Activated T-helper 2 cell treated with anti-CD3 and anti-CD28 coated beads, Interferon-gamma antibody, Interleukin-2, Interleukin-4, amounts not matched to agents 10 μg/mL and 5 μg/mL and 100 μg/mL, durations not matched to agents 14 hours and 24 hours and 36 hours (primary cell): ENCODE measurements at regions of chr19 and their contacts with region 1.

Region 1: GRCh38 chr19:8580710-8581281 is 3.6 kb upstream of the MYO1F start:
- DNase-seq: peak; percentile 78
- H3K4me3 Mint-ChIP-seq: no peak overlapping the region
- H3K27ac Mint-ChIP-seq: no peak overlapping the region
- H3K4me1 Mint-ChIP-seq: peaks cover 23% of the 10 kb centered on the region
- H3K27me3 Mint-ChIP-seq: peaks cover 4% of the 10 kb centered on the region

Region 2: GRCh38 chr19:8355631-8356402 is 225.0 kb before region 1 on chr19:
- intact Hi-C with region 1: loop called (anchors 5 kb)
- DNase-seq: no peak
- H3K4me3 Mint-ChIP-seq: no peak overlapping the region
- H3K27ac Mint-ChIP-seq: peak overlapping the region; percentile 47
- H3K4me1 Mint-ChIP-seq: peaks cover 13% of the 10 kb centered on the region
- H3K27me3 Mint-ChIP-seq: peaks cover 16% of the 10 kb centered on the region

Region 3: DNA sequence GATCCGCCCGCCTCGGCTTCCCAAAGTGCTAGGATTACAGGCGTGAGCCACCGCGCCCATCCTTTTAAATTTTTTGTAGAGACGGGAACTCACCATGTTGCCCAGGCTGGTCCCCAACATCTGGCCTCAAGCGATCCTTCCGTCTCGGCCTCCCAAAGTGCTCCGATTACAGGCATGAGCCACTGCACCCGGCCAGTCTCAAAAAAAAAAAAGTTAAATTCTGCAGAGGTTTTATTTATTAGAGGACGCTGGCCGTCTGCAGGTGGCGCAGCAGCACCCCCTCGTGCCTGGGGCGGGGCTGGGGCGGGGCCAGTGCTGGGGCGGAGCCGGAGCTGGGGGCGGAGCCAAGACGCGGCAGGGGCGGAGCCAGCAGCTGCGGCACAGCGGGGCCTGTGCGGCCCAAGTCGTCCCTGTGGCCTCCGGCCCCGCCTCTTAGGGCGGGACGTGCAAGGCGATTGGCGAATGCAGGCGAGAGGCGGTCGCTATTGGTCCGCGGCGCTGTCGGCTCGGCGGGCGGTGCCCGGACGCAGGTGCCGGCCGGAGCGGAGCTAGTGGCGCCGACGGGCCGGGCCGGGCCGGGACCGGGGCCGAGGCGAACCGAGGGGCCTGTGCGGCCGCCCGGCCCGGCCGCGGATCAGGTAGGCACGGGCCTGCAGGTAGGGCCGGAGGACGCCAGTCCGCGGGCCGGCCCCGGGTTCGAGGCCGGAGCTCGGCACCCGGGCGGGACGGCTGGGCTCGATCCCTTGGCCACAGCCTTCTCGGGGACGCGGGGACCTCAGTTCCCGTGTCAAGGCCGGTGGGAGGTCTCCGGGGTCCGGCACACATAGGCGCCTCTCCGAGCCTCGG is 167.8 kb before region 1 on chr19 and contains the start of gene MARCHF2:
- intact Hi-C with region 1: loop called (anchors 10 kb)
- DNase-seq: peak; percentile 94
- H3K4me3 Mint-ChIP-seq: peak within 1 kb of the TSS; percentile 65
- H3K27ac Mint-ChIP-seq: no peak within 1 kb of the TSS
- H3K4me1 Mint-ChIP-seq: peaks cover 7% of the 10 kb centered on the region
- H3K27me3 Mint-ChIP-seq: no peaks in the 10 kb centered on the region
- total RNA-seq, gene MARCHF2: 10.2 and 13.0 TPM in 2 replicates

Region 4: GRCh38 chr19:8552810-8553209 is 28.0 kb before region 1 on chr19:
- intact Hi-C with region 1: no loop called
- DNase-seq: no peak
- H3K4me3 Mint-ChIP-seq: no peak overlapping the region
- H3K27ac Mint-ChIP-seq: no peak overlapping the region
- H3K4me1 Mint-ChIP-seq: peaks cover 2% of the 10 kb centered on the region
- H3K27me3 Mint-ChIP-seq: no peaks in the 10 kb centered on the region

Region 5: GRCh38 chr19:8681345-8682029 is 100.7 kb after region 1 on chr19:
- intact Hi-C with region 1: no loop called
- DNase-seq: no peak
- H3K4me3 Mint-ChIP-seq: no peak overlapping the region
- H3K27ac Mint-ChIP-seq: no peak overlapping the region
- H3K4me1 Mint-ChIP-seq: peaks cover 24% of the 10 kb centered on the region
- H3K27me3 Mint-ChIP-seq: peaks cover 7% of the 10 kb centered on the region